ENCODE measurements at regions of chr4 and their contacts with region 1.

Region 1: DNA sequence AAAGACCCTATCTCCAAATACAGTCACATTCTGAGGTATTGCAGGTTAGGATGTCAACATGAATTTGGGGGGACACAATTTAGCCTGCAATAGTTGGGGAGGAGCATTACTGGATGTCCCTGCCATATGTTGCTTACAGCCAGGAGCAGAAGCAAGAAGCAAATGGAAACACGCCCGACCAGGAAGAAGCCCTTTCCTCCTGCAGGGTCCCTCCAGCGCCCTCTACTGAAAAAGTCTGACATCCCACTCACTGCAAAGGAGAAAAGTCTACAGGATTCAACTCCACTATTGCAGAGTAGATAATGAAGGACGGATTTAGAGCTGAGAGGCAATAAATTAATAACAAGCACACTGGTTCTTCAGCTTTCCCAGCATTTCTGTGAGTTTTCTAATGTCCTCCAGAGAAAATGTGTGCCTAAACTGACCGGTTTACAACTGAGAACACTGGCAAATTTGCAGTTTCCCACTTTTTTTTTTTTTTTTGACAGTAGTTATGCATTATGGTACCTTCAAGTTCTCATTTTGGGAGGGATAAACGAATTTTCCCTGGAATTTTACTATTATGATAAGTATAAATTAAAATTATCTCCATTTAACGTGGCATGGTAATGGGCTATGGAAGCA is 31.7 kb downstream of the COQ2 start:
- DNase-seq: no peak
- H3K4me3 ChIP-seq: no peak overlapping the region
- CTCF ChIP-seq: peak; percentile 59

Region 2: DNA sequence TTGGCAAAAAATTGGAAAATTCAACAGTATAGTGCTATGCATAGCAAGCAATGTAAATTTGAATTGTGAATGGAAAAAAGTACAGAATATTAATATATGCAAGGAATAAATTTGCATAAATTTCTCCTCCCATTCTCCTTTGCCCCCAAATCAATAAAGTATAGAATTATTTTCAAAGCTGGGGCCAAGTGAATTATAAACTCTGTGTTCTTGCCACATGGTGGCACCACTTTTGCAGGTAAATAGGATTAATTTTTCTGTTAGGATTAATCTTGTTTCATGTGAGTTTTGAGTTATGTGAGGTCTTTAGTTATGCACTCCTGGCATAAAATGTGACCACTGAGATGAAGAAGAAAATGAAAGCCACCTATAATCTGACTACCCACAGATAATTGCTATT is 198.0 kb before region 1 on chr4:
- CTCF ChIA-PET with region 1: interaction called, 11 read pairs
- POLR2A ChIA-PET with region 1: no interaction called
- DNase-seq: no peak
- H3K4me3 ChIP-seq: no peak overlapping the region
- CTCF ChIP-seq: no peak

Region 3: DNA sequence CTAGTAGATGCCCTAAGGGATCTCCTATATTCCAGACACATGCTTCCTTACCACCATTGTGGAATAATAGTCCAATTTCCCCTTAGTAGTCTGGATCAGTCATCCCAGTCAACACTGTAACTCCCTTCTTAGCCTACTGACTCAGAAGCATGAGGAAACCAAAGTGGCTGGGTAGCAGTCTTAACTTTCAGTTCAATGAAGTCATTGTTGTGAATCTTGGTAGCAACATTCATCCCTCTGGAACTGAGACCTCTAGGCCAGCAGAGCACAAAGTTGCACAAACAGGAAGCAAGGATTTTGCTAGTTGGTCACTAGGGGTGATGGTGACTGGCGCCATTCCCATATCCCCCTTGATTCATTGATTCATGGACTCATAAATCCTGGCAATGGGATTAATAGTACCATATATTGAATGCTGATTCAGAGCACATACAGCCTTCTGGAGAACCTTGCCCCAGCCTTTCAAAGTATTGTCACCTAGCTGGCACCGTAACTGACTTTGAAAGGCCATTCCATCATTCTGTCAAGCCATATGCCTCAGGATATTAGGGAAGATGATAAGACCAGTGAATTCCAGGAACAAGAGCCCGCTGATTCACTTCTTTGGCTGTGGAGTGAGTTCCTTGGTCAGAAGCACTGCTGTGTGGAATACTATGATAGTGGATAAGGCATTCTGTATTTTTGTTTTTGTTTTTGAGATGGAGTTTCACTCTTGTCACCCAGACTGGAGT is 263.3 kb after region 1 on chr4:
- CTCF ChIA-PET with region 1: no interaction called
- POLR2A ChIA-PET with region 1: no interaction called
- DNase-seq: peak; percentile 17
- H3K4me3 ChIP-seq: no peak overlapping the region
- CTCF ChIP-seq: no peak

Region 4: DNA sequence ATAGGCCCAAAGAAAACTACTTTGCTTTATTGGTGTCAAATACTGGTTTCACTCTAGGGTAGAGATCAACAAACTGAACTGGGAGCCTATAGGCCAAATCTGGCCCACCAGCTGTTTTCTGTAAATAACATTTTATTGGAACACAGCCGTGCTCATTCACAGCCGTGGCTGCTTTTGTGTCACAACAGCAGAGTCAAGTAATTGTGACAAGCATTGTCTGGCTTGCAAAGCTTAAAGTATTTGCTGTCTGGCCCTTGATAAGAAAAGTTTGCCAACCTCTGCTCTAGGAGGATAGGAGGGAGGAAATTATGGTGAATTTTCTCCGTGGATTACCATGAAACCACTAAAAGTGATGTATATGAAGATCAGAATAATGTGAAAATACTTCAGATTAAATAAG is 336.4 kb after region 1 on chr4:
- CTCF ChIA-PET with region 1: no interaction called
- POLR2A ChIA-PET with region 1: no interaction called
- DNase-seq: no peak
- H3K4me3 ChIP-seq: no peak overlapping the region
- CTCF ChIP-seq: no peak

Measured in AG04449 (cell line).